IMR-90 (cell line): ENCODE measurements at regions of chr1 and their contacts with region 1.

Region 1: DNA sequence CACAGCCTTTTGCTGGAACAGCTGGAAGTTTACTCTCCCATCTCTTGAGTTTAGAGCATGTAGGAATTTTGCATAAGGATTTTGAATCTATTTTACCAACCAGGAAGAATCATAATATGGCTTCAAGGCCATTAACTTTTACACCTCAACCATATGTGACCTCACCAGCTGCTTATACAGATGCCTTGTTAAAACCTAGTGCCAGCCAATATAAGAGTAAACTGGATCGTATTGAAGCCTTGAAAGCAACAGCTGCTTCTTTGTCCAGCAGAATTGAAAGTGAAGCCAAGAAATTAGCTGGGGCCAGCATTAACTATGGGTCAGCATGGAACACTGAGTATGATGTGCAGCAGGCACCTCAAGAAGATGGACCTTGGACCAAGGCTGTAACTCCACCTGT is 65.4 kb downstream of the CEP350 start:
- DNase-seq: no peak
- ATAC-seq: no peak
- H3K4me3 ChIP-seq: no peak overlapping the region
- H3K27ac ChIP-seq: no peak overlapping the region
- H3K4me1 ChIP-seq: no peaks in the 10 kb centered on the region
- H3K27me3 ChIP-seq: no peaks in the 10 kb centered on the region
- CTCF ChIP-seq: no peak
- POLR2A ChIP-seq: no peak
- RAD21 ChIP-seq: no peak

Region 2: DNA sequence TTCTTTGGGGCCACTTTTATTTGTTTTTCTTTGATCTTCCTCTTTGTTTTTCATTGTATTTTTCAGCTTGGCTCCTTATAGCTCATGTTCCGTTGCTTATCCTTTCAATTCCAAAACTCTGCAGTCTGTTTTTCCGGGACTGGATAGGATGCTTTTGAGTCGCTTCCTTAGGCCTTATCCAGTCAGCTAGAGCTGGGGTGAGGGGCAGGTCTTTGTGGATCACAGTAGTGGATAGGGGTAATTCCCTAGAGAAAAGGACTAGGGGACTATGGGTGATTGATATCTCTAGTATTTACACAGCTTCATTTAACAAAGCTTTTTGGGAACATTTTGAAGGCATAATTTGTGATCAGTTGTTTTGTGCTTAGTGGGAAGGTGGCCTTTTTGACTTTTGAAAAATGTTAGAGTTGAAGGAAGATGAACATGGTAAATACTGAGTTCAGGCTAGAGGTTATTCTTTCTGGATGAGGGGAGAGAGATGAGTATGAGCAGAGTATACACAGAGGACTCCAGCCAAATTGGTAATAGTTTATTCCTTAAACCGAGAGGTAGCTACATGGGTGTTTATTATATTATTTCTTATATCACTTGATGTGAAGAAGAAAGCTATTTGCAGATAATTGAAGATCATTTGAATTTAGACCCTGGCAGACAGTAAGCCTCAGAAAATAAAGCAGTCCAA is 42.9 kb before region 1 on chr1:
- CTCF ChIA-PET with region 1: no interaction called
- POLR2A ChIA-PET with region 1: no interaction called
- dilution Hi-C with region 1: no loop called
- in situ Hi-C with region 1: no loop called
- intact Hi-C with region 1: loop called (anchors 5 kb)
- DNase-seq: no peak
- ATAC-seq: peak; percentile 59
- H3K4me3 ChIP-seq: no peak overlapping the region
- H3K27ac ChIP-seq: no peak overlapping the region
- H3K4me1 ChIP-seq: peaks cover 5% of the 10 kb centered on the region
- H3K27me3 ChIP-seq: no peaks in the 10 kb centered on the region
- CTCF ChIP-seq: no peak
- POLR2A ChIP-seq: no peak
- RAD21 ChIP-seq: no peak

Region 3: GRCh38 chr1:180213401-180214170 is 193.6 kb after region 1 on chr1:
- CTCF ChIA-PET with region 1: no interaction called
- POLR2A ChIA-PET with region 1: no interaction called
- dilution Hi-C with region 1: no loop called
- in situ Hi-C with region 1: no loop called
- intact Hi-C with region 1: no loop called
- DNase-seq: no peak
- ATAC-seq: no peak
- H3K4me3 ChIP-seq: no peak overlapping the region
- H3K27ac ChIP-seq: no peak overlapping the region
- H3K4me1 ChIP-seq: peaks cover 2% of the 10 kb centered on the region; the same call in 1 of the 2 replicates
- H3K27me3 ChIP-seq: peaks cover 7% of the 10 kb centered on the region; the same call in 1 of the 2 replicates
- CTCF ChIP-seq: no peak
- POLR2A ChIP-seq: no peak
- RAD21 ChIP-seq: no peak

Region 4: DNA sequence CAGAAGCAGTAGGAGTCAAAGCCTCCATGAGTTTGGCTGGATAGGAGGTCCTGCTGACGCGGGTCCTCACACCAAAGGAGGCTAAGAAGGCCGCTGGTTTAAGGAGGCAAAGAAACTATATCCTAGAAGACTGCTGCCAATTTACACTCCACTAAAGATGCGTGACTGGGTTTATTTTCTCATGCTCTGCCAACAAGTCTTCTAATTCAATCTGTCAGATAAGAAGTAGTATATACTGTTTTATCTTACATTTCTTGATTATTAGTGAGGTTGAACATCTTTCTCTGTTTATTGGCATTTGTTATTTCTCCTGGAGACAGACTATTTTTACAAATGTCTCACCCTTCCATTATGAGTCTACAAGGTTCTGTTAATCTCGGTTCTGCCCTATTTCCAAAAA is 448.3 kb after region 1 on chr1:
- CTCF ChIA-PET with region 1: no interaction called
- POLR2A ChIA-PET with region 1: no interaction called
- dilution Hi-C with region 1: no loop called
- in situ Hi-C with region 1: no loop called
- intact Hi-C with region 1: no loop called
- DNase-seq: no peak
- ATAC-seq: no peak
- H3K4me3 ChIP-seq: no peak overlapping the region
- H3K27ac ChIP-seq: no peak overlapping the region
- H3K4me1 ChIP-seq: no peaks in the 10 kb centered on the region
- H3K27me3 ChIP-seq: no peaks in the 10 kb centered on the region
- CTCF ChIP-seq: no peak
- POLR2A ChIP-seq: no peak
- RAD21 ChIP-seq: no peak